Activated T-helper 1 cell treated with anti-CD3 and anti-CD28 coated beads, Interleukin-12 subunit alpha, Interleukin-12 subunit beta, Interleukin-2, Interleukin-4 antibody, amounts not matched to agents 30 ng/mL and 10 ng/mL and 1 ng/mL, durations not matched to agents 14 hours and 24 hours and 36 hours (primary cell): ENCODE measurements at regions of chr2 and their contacts with region 1.

Region 1: DNA sequence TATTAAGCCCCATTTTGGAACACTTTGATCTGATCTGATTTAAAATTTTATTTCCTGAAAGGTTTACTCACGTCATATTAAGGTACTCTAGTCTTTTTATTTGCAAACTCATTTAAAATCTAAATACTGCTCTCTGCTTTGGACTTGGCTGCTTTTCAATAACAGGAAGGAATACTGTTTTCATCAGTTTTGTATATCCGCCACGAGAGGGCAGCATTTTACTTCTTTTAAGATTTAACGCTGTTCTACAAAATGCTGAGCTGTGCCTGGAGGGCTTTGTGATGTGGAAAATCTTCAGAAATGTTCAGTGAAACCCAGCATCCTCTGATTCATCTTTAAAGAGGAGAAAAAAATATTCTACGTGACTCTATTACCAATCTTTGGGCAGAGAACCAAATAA is 37.5 kb upstream of the SLC38A11 start:
- DNase-seq: peak; percentile 33
- H3K4me3 Mint-ChIP-seq: no peak overlapping the region
- H3K27ac Mint-ChIP-seq: no peak overlapping the region
- H3K4me1 Mint-ChIP-seq: peaks cover 39% of the 10 kb centered on the region
- H3K27me3 Mint-ChIP-seq: no peaks in the 10 kb centered on the region

Region 2: DNA sequence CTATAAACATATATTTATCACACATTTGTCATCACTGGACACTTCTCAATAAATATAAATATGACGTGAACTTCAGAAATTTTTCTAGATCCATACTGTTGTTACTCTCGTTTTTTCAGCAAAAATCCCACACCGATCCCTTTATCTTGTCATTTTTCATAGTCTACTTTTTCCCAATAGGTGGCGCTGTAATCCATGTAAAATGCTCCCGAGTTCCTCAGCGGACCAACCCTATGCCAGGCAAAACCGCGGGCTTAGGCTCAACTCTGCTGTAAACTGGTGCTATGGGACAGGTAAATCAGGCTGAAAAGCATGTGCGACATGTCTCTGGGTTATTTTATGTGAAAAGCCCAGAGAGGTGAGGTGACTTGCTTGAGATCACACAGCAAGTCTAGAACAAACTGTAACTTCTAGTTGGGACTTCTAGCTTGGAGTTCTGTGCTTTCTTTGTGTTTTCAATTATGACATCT is 255.2 kb before region 1 on chr2:
- intact Hi-C with region 1: loop called (anchors 1 kb)
- DNase-seq: no peak
- H3K4me3 Mint-ChIP-seq: no peak overlapping the region
- H3K27ac Mint-ChIP-seq: no peak overlapping the region
- H3K4me1 Mint-ChIP-seq: no peaks in the 10 kb centered on the region
- H3K27me3 Mint-ChIP-seq: peaks cover 7% of the 10 kb centered on the region

Region 3: DNA sequence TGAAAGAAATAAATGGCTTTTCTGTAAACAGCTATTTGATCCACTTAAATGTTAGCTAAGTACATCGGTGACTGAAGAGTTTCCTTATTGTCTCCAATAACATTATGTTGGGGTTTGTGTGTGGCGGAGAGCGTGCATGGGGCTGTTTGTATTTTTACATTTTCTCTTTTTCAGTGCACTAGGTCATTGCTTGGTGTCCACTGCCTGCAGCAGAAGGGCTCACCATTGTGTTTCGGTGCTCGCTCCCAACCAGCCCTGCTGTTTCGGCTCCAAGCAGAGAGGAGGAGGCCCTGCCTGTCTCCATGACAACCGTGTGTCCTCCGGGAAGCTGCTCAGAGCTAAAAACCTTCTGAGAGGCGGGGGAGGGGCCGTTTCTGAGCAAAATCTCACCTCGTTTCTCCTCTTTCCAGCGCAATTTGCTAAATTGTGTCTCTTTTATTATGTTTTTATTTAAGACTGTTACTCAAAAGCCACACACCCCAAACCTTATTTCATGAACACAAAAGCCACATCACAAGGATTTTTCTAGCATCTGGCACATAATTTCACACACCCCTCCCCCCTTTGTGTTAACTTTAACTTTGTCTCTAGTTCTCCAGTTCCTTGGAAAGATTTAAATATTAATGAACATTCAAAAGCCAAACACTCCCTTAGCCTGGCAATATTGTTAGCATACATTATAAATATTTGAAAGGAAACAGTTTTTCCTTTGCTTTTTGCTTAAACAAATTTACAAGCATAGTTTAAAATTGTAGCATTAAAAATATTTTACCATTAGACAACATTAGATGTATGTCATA is 75.3 kb after region 1 on chr2:
- intact Hi-C with region 1: no loop called
- DNase-seq: no peak
- H3K4me3 Mint-ChIP-seq: no peak overlapping the region
- H3K27ac Mint-ChIP-seq: no peak overlapping the region
- H3K4me1 Mint-ChIP-seq: no peaks in the 10 kb centered on the region
- H3K27me3 Mint-ChIP-seq: no peaks in the 10 kb centered on the region

Region 4: DNA sequence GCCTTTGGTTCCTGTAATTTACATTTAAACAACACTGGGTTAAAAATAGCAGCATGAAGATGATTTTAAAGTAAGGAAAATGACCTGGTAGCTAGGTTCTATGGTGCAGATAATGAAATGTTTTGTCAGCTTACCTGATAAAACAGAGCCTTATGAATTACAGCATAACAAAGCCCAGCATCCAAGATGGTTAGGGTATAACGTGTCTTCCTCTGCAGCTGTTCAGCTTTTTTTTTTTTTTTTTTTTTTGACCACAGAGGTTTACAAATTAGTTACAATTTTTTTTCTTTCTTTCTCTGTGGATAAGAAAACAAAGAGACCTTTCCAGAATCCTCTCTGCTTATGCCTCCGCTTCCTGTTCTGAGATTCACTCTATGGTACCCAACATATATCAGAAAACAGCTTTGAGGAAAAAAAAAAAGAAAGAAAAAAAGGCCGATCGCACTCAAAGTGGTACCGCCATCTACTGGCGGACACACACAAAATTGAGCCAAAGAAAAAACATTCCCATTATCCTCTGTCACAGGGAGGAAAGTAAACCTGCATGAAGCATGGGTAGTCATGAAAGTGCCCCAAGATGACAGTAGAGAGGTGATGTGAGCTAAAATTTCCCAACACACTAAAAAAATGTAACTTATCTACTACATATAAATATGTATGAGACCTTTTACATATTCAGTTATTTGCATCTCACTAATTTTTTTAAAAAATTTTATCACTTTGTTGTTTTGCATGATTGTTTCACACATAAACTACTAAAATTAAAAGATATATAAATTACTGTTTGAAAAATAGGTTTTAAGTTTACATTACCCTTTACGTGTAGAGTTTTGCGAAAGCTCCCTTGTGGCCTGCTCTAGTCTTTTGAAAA is 211.1 kb after region 1 on chr2 and contains the start of gene SCN3A:
- intact Hi-C with region 1: loop called (anchors 1 kb)
- DNase-seq: no peak
- H3K4me3 Mint-ChIP-seq: no peak within 1 kb of the TSS
- H3K27ac Mint-ChIP-seq: no peak within 1 kb of the TSS
- H3K4me1 Mint-ChIP-seq: no peaks in the 10 kb centered on the region
- H3K27me3 Mint-ChIP-seq: peaks cover 2% of the 10 kb centered on the region
- total RNA-seq, gene SCN3A: not detected in 2 replicates

Region 5: GRCh38 chr2:165401285-165401852 is 408.6 kb after region 1 on chr2:
- intact Hi-C with region 1: loop called (anchors 5 kb)
- DNase-seq: no peak
- H3K4me3 Mint-ChIP-seq: no peak overlapping the region
- H3K27ac Mint-ChIP-seq: no peak overlapping the region
- H3K4me1 Mint-ChIP-seq: no peaks in the 10 kb centered on the region
- H3K27me3 Mint-ChIP-seq: peaks cover 27% of the 10 kb centered on the region

Region 6: GRCh38 chr2:165874445-165875039 is 881.7 kb after region 1 on chr2:
- intact Hi-C with region 1: loop called (anchors 2 kb)
- DNase-seq: peak; percentile 9
- H3K4me3 Mint-ChIP-seq: no peak overlapping the region
- H3K27ac Mint-ChIP-seq: no peak overlapping the region
- H3K4me1 Mint-ChIP-seq: peaks cover 34% of the 10 kb centered on the region
- H3K27me3 Mint-ChIP-seq: no peaks in the 10 kb centered on the region

Region 7: DNA sequence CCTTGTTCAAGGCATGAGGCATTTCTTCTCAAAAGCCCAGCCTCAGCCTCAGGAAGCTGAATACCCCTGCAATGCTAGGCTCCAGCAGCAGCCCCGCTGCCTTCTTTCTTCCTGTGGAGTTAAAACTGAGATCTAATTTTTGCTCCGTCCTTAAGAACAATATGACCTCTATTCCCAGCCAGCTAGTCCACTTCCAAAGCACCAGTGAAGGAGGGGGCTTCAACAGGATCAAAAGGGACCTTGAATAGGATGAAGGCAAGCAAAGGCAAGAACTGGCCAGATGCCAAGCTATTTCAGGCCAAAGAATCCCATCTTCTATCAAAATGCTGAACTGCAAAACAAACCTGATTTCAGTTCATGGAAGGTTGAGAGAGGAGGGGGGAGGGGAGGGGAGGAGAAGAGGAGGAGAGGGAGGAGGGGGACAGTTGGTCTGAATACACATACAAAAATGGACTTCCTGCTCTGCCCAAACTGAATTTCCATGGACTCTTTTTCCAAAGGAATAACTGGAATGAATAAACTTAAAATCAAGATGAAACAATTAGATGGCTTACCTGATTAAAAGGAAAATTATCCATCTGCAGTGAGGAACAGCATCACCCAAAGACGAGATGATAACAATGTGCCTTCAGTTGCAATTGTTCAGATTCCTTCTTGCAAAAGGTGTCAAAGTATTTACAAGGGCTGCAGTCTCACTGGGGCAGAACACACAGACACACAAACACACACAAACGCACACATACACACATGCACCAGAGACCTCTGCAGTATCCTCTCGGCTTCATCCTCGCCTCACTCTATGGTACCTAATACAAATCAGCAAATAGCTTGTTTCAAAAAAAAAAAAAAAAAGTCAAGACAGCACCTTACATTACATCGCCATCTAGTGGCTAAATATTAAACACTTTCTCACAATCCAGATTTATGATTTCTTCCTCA is 1134.7 kb after region 1 on chr2 and contains the start of gene SCN1A:
- intact Hi-C with region 1: loop called (anchors 2 kb)
- DNase-seq: no peak
- H3K4me3 Mint-ChIP-seq: no peak within 1 kb of the TSS
- H3K27ac Mint-ChIP-seq: no peak within 1 kb of the TSS
- H3K4me1 Mint-ChIP-seq: no peaks in the 10 kb centered on the region
- H3K27me3 Mint-ChIP-seq: peaks cover 9% of the 10 kb centered on the region
- total RNA-seq, gene SCN1A: not detected in 2 replicates